ENCODE measurements at regions of chr4 and their contacts with region 1.

Region 1: GRCh38 chr4:90799894-90800293 is 672.7 kb downstream of the CCSER1 start:
- DNase-seq: no peak
- H3K4me3 Mint-ChIP-seq: no peak overlapping the region
- H3K27ac Mint-ChIP-seq: no peak overlapping the region
- H3K4me1 Mint-ChIP-seq: no peaks in the 10 kb centered on the region
- H3K27me3 Mint-ChIP-seq: no peaks in the 10 kb centered on the region
- CTCF ChIP-seq: no peak

Region 2: DNA sequence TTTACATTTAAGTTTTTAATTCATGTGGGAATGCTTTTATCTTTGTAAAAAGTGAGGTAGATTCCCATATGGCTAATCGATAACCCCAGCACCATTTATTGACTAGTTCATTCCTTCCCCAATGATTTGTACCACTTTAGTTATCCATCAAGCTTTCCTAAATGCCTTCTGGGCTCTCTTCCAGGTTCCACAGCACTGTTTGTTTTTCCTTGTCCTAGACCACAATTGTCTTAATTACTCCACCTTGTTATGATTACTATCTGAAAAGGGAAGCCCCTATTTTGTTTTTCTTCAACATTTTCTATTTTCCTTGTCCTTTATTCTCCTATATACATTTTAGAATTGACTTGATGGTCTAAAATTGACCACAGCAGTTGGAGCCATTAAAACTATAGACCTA is 1443.8 kb before region 1 on chr4:
- CTCF ChIA-PET with region 1: no interaction called
- intact Hi-C with region 1: no loop called
- DNase-seq: no peak
- H3K4me3 Mint-ChIP-seq: no peak overlapping the region
- H3K27ac Mint-ChIP-seq: peak overlapping the region; percentile 39
- H3K4me1 Mint-ChIP-seq: peaks cover 13% of the 10 kb centered on the region
- H3K27me3 Mint-ChIP-seq: no peaks in the 10 kb centered on the region
- CTCF ChIP-seq: no peak

Region 3: DNA sequence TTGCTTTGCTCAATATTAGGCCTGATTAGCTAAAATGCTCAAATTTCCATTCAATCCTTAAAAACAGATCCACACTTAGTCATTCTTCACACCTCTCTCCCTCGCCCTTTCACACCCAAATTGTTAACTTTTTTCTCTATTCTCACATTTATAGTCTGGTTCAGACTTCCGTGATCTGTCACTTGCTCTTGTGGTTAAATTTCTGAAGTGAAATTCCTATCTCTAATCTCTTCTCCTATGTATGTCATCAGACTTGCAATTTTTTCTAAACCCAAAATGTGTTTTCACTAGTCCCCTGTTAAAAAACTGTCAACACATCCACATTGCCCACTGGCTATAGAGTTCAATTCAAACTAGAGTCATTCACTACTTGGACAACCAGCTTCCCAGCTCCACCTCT is 1026.1 kb before region 1 on chr4:
- CTCF ChIA-PET with region 1: no interaction called
- intact Hi-C with region 1: no loop called
- DNase-seq: no peak
- H3K4me3 Mint-ChIP-seq: no peak overlapping the region
- H3K27ac Mint-ChIP-seq: no peak overlapping the region
- H3K4me1 Mint-ChIP-seq: no peaks in the 10 kb centered on the region
- H3K27me3 Mint-ChIP-seq: no peaks in the 10 kb centered on the region
- CTCF ChIP-seq: no peak

Region 4: DNA sequence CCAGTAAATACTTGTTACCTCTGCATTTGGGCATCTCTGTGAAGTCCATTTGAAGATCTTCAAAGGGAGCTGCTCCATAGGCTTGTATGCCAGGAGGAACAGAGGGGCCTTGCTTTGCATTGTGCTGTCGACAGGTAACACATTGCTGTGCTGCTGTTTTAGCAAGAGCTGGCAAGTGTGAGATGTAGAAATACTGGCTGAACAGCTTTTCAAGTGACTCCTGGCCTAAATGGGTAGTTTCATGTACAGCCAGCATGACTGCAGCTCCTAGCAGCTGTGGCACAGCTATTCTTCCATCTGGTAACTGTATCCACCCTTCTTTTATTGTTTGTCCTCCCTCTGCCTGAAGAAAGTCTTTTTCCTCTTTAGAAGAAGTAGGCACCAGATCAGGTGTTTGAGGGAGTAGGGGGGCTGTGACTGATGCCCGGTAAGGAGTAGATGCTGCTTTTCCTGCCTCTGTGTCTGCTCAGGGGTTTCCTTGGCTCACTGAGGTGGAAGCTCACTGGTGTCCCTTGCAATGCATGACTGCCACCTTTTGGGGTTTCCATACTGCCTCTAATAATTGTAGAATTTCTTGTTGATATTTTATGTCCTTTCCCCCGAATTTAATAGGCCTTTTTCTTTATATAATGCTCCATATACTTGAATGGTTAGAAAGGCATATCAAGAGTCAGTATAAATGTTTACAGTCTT is 292.6 kb after region 1 on chr4:
- CTCF ChIA-PET with region 1: no interaction called
- intact Hi-C with region 1: loop called (anchors 10 kb)
- DNase-seq: peak; percentile 23
- H3K4me3 Mint-ChIP-seq: no peak overlapping the region
- H3K27ac Mint-ChIP-seq: no peak overlapping the region
- H3K4me1 Mint-ChIP-seq: no peaks in the 10 kb centered on the region
- H3K27me3 Mint-ChIP-seq: no peaks in the 10 kb centered on the region
- CTCF ChIP-seq: no peak